ENCODE measurements at regions of chr1 and their contacts with region 1.

Region 1: GRCh38 chr1:38586993-38587646 is 272.5 kb downstream of the RRAGC start:
- DNase-seq: peak; percentile 82

Region 2: GRCh38 chr1:38026592-38027200 is 560.4 kb before region 1 on chr1:
- intact Hi-C with region 1: loop called (anchors 5 kb)
- DNase-seq: peak; percentile 58

Region 3: GRCh38 chr1:38571726-38572125 is 15.4 kb before region 1 on chr1:
- intact Hi-C with region 1: no loop called
- DNase-seq: no peak